Breast epithelium (tissue), 4 donors: ENCODE measurements at regions of chr6 and their contacts with region 1.

Region 1: DNA sequence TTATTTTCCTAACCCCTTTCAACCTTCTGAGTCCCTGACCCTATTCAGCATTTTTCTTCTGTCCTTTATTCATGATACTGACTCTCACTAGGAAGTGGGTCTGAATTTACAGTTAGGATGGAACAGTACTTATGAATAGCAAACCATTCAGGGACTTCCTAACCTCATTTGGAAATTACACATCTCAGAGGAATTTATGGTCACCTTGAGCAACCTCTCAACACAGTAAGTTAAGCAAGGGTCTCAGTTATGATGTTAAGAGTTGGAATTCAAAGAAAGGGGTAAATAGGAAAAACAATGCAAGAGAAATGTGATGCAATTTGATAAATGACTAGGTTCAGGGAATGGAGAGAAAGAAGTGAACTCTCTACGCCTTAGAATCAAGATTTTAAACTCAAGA is 97.3 kb downstream of the GPR6 start:
- DNase-seq: no peak
- H3K4me3 ChIP-seq: no peak overlapping the region
- H3K27ac ChIP-seq: no peak overlapping the region
- H3K4me1 ChIP-seq: no peaks in the 10 kb centered on the region
- H3K27me3 ChIP-seq: no peaks in the 10 kb centered on the region
- CTCF ChIP-seq: no peak
- POLR2A ChIP-seq: no peak

Region 2: GRCh38 chr6:110517601-110518281 is 442.3 kb after region 1 on chr6:
- intact Hi-C with region 1: loop called (anchors 5 kb)
- DNase-seq: no peak
- H3K4me3 ChIP-seq: no peak overlapping the region
- H3K27ac ChIP-seq: peak overlapping the region in 1 of 2 donors; percentile 27
- H3K4me1 ChIP-seq: peaks cover 0 to 5% of the 10 kb centered on the region in 2 donors
- H3K27me3 ChIP-seq: no peaks in the 10 kb centered on the region
- CTCF ChIP-seq: no peak
- POLR2A ChIP-seq: no peak